ENCODE measurements at regions of chr5 and their contacts with region 1.

Region 1: DNA sequence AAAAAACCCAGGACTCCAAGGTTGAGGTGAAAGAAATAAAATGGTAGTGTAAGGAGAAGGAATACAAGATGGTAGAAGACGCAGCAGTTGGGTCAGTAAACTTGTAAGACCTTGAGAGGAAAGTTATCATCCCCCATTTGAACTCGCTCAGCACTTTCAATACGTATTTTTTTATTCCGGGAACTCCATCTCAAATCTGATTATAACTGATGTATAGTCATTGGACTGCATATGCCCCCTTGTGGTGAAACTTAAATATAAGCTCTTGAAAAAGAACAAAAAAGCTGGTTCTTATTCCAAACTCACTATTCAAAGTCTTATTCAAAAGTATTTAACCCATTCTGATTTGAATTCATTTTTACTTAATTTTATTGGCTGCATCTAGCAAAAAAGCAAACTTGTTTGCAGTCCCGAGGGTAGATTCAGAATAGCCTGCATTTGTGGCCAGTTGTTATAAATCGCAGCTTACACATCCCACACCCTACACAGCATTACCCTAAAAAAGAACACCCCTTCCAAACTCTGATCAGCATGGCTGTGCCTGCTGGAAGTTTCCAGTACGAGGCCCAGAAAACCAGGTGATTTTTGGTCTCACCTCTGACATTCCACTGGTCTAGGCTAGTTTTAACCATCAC is 118.0 kb downstream of the ESM1 start:
- DNase-seq: no peak
- H3K4me3 ChIP-seq: no peak overlapping the region
- H3K27ac ChIP-seq: no peak overlapping the region
- H3K27me3 ChIP-seq: peaks cover 6% of the 10 kb centered on the region
- CTCF ChIP-seq: peak; percentile 62

Region 2: GRCh38 chr5:54443270-54443669 is 424.2 kb before region 1 on chr5:
- CTCF ChIA-PET with region 1: interaction called, 22 read pairs
- POLR2A ChIA-PET with region 1: no interaction called
- DNase-seq: peak; percentile 24
- H3K4me3 ChIP-seq: no peak overlapping the region
- H3K27ac ChIP-seq: no peak overlapping the region
- H3K27me3 ChIP-seq: peaks cover 23% of the 10 kb centered on the region
- CTCF ChIP-seq: peak; percentile 70

Region 3: DNA sequence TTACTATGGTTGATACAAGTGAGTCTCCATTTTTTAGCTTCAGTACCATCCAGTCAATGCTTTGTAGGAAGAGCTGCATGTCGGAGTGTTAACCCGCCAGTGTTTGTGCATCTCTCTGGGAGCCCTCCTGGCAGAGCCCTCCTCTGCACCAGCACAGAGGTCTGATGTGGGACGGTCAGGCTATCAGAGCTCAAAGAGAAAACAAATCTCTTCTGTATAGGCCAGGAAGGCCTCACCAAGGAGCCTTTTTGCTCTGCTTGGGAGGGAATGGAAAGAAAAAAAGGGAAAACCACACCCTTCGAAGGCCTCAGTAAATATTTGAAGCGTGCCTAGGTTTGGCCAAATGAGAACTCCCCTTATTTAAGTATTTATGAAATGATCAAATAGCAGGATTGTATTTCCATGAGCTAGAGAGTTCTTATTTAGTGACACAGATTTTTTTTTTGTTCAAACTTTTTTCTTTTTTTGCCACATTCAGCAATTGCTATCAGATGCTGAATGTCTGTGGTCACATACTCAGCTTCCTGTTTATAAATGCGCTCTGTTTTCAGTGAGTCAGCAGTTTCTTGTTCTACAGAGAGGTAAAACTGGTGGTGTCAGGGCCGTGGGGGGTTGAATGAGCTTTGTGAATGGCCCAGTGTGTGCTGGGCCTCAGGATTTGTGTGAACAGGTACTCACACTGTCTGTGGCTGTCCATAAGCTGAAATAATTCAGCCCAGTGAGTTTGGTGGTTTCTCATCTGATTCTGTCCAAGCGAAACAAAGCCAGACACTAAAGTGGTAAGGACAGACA is 123.2 kb before region 1 on chr5:
- CTCF ChIA-PET with region 1: no interaction called
- POLR2A ChIA-PET with region 1: no interaction called
- DNase-seq: peak; percentile 96
- H3K4me3 ChIP-seq: 0 out of 2 replicates have a peak overlapping the region, but pooled peaks have one; percentile 3
- H3K27ac ChIP-seq: peak overlapping the region; percentile 99
- H3K27me3 ChIP-seq: no peaks in the 10 kb centered on the region
- CTCF ChIP-seq: no peak

Region 4: DNA sequence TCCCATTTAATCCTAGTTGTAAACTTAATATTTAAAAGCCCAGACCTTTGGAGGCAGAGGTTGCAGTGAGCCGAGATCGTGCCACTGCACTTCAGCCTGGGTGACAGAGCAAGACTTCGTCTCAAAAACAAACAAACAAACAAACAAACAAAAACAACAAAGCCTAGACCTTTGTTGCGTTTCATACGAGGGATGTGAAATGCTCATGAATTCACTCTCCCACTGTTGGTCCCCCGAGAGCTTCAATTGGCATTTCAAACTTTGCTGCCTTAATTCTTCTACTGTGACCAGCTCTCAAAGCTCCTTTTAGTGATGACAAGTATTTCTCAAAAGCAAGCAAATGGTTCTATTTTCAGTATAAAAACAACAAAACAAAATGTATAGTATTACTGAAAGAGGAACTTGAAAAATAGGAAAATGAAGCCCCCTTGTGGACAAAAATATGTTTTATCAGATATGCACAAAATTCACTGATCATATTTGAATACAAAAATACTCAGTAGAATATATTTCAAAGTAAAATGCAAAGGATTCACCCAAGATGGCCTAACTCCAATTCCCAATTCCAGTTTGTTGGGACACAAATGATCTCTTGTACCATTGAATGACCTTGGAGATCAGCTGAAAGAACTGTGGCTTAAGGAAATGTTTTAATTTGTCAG is 22.4 kb before region 1 on chr5:
- CTCF ChIA-PET with region 1: interaction called, 16 read pairs
- POLR2A ChIA-PET with region 1: no interaction called
- DNase-seq: peak; percentile 41
- H3K4me3 ChIP-seq: no peak overlapping the region
- H3K27ac ChIP-seq: no peak overlapping the region
- H3K27me3 ChIP-seq: no peaks in the 10 kb centered on the region
- CTCF ChIP-seq: peak; percentile 40

Region 5: DNA sequence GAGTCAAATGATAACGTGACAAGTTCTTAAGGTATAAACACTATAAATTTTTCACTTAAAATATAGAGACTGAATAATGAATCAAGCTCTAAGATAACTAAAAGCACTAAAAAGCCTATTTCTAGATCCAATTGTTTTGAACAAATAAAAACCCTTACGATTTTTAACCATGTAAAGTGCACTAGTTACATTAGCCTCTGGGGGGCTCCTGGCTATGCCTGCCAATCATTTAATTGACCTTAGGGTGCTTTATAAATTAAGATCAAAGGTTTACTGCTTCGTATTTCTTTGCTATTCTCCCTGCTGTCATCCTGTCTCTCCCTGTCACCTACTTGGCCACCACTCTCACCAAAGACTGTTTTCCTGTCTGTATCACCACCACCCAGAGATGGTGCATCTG is 15.4 kb before region 1 on chr5:
- CTCF ChIA-PET with region 1: interaction called, 14 read pairs
- POLR2A ChIA-PET with region 1: no interaction called
- DNase-seq: no peak
- H3K4me3 ChIP-seq: no peak overlapping the region
- H3K27ac ChIP-seq: no peak overlapping the region
- H3K27me3 ChIP-seq: no peaks in the 10 kb centered on the region
- CTCF ChIP-seq: no peak; the same call in 1 of the 2 replicates

Region 6: GRCh38 chr5:54895816-54896341 is 28.5 kb after region 1 on chr5:
- CTCF ChIA-PET with region 1: interaction called, 17 read pairs
- POLR2A ChIA-PET with region 1: no interaction called
- DNase-seq: no peak
- H3K4me3 ChIP-seq: no peak overlapping the region; the same call in 1 of the 2 replicates
- H3K27ac ChIP-seq: no peak overlapping the region
- H3K27me3 ChIP-seq: peaks cover 2% of the 10 kb centered on the region
- CTCF ChIP-seq: peak; percentile 73